ENCODE measurements at regions of chr12 and their contacts with region 1.

Region 1: DNA sequence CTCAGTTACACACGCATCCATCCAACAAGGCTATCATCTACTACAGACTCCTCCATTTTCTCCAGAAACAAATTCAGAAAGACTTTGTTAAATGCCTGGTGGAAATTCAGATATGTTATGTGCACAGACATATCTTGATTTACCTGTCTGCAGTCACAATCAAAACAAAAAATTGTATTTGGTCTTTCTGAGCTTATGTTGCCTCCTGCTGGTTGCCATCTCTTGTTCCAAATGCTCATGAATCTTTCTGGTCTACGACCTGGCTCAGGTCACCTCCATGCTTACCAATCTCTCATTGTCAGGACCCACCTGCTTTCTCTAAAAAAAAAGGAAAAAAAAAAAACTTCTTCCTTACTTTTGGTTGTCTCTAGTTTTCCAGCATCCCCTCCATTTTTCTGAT is 169.2 kb upstream of the PLXNC1 start:
- DNase-seq: no peak
- H3K4me3 ChIP-seq: no peak overlapping the region
- H3K27ac ChIP-seq: no peak overlapping the region
- H3K4me1 ChIP-seq: peaks cover 0 to 7% of the 10 kb centered on the region in 2 donors
- H3K27me3 ChIP-seq: no peaks in the 10 kb centered on the region
- CTCF ChIP-seq: peak; percentile 10 to 40 (median 20)

Region 2: DNA sequence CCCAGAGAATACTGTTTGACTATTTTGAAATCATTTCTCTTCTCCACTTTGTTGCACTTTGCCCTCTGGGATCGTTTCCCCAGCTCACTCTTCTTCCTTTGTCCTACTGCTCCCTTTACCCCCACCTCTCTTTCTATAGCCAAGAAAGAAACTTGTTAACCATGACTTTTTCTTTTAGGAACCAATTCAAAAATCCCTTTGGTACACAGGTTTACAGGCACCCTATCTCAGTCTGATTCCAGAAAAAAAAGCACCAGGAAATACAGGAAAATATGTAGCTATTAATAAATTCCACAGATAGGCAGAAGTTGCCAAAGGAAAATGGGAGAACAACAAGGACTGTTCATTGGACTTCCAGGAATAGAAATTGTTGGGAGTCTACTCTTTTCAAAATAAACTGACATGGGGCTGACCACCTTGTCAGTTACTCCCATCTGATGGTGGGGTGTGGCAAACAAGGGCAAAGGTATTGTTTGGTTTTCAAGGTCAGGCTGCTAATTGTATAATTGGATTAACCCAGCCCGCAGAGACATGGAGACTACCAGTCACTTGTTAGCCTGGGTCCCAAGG is 219.6 kb before region 1 on chr12:
- intact Hi-C with region 1: loop called (anchors 5 kb)
- DNase-seq: no peak
- H3K4me3 ChIP-seq: no peak overlapping the region
- H3K27ac ChIP-seq: peak overlapping the region in 1 of 2 donors; percentile 13
- H3K4me1 ChIP-seq: peaks cover 0 to 12% of the 10 kb centered on the region in 2 donors
- H3K27me3 ChIP-seq: no peaks in the 10 kb centered on the region
- CTCF ChIP-seq: no peak

Region 3: GRCh38 chr12:93950311-93950710 is 28.9 kb before region 1 on chr12:
- intact Hi-C with region 1: loop called (anchors 2 kb)
- DNase-seq: no peak
- H3K4me3 ChIP-seq: no peak overlapping the region
- H3K27ac ChIP-seq: peak overlapping the region; percentile 31 to 36
- H3K4me1 ChIP-seq: peaks cover 0 to 2% of the 10 kb centered on the region in 2 donors
- H3K27me3 ChIP-seq: no peaks in the 10 kb centered on the region
- CTCF ChIP-seq: no peak